PC-9 (cell line): ENCODE measurements at regions of chr6 and their contacts with region 1.

Region 1: GRCh38 chr6:28895134-28895812 is 28.5 kb downstream of the TRIM27 start:
- DNase-seq: peak; percentile 92
- H3K4me3 ChIP-seq: peak overlapping the region; percentile 92
- H3K27ac ChIP-seq: peak overlapping the region; percentile 89
- H3K4me1 ChIP-seq: peaks cover 7% of the 10 kb centered on the region
- H3K27me3 ChIP-seq: no peaks in the 10 kb centered on the region
- CTCF ChIP-seq: no peak

Region 2: GRCh38 chr6:28606424-28607400 is 288.6 kb before region 1 on chr6:
- CTCF ChIA-PET with region 1: no interaction called
- POLR2A ChIA-PET with region 1: interaction called, 12 read pairs
- intact Hi-C with region 1: no loop called
- DNase-seq: peak; percentile 55 to 62
- H3K4me3 ChIP-seq: peak overlapping the region; percentile 65
- H3K27ac ChIP-seq: 0 out of 2 replicates have a peak overlapping the region, but pooled peaks have one; percentile 5
- H3K4me1 ChIP-seq: peaks cover 10% of the 10 kb centered on the region; the same call in 1 of the 2 replicates
- H3K27me3 ChIP-seq: no peaks in the 10 kb centered on the region
- CTCF ChIP-seq: peak; percentile 68

Region 3: GRCh38 chr6:28863604-28864320 is 31.5 kb before region 1 on chr6:
- CTCF ChIA-PET with region 1: interaction called, 4 read pairs
- POLR2A ChIA-PET with region 1: interaction called, 3 read pairs
- intact Hi-C with region 1: loop called (anchors 1 kb)
- DNase-seq: peak; percentile 77 to 85
- H3K4me3 ChIP-seq: peak overlapping the region; percentile 81
- H3K27ac ChIP-seq: peak overlapping the region; percentile 37
- H3K4me1 ChIP-seq: peaks cover 12% of the 10 kb centered on the region
- H3K27me3 ChIP-seq: no peaks in the 10 kb centered on the region
- CTCF ChIP-seq: peak; percentile 35; the same call in 1 of the 2 replicates

Region 4: DNA sequence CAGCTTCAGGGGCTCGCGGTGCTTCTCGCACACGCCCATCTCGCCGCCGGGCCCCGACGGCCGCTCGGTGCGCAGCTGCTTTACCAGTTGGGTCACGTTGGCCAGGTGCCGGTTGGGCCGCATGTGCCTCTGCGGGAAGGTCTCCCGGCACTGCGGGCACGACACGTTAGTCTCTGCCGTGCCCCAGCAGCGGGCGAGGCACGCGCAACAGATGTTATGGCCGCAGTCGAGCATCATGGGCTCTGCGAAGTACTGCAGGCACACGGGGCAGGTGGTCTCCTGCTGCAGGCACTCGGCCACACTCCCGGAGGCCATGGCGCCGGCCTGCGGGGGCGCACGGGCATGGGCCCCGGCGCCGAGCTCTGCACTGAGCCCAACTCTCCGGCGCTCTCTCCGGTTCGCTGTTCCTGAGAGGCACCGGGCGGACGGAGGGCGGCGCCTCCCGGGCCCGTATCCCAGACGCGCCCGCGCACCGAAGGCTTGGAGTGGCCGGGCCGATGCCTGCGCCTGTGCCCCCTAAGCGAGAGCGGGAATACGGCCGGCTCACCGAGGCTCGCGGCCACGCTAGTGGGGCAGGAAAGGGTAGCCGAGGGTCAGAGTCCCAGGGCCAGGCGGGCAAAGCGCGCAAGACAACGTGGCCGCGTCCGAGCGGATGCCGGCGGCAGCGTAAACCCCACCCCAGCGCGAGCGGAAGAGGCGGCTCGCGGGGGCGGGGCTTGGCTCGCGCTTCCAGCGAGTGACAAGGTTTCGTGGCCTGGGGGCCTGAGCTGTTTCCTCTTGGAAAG is 28.2 kb after region 1 on chr6 and contains the start of gene TRIM27:
- CTCF ChIA-PET with region 1: no interaction called
- POLR2A ChIA-PET with region 1: interaction called, 8 read pairs
- intact Hi-C with region 1: loop called (anchors 1 kb)
- DNase-seq: peak; percentile 83 to 94
- H3K4me3 ChIP-seq: peak within 1 kb of the TSS; percentile 91
- H3K27ac ChIP-seq: peak within 1 kb of the TSS; percentile 76
- H3K4me1 ChIP-seq: peaks cover 20% of the 10 kb centered on the region
- H3K27me3 ChIP-seq: no peaks in the 10 kb centered on the region
- CTCF ChIP-seq: no peak
- total RNA-seq, gene TRIM27: 67.2 and 86.2 TPM in 2 replicates

Region 5: DNA sequence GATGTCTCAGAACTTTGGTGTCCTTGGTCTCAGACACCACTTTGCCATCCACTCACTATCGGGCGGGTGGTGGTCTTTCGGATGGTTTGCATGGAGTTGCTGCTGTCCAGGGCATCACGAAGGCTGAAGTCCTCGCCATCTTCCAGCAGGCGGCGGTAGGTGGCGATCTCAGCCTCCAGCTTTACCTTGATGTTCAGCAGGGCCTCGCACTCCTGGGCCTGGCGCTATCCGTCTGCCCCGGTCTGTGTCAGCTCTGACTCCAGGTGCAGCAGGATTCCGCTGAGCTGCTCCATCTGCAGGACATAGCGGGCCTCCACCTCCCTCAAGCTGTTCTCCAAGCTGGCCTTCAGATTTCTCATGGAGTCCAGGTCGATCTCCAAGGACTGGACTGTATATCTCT is 73.9 kb after region 1 on chr6:
- CTCF ChIA-PET with region 1: no interaction called
- POLR2A ChIA-PET with region 1: interaction called, 14 read pairs
- intact Hi-C with region 1: no loop called
- DNase-seq: no peak
- H3K4me3 ChIP-seq: no peak overlapping the region
- H3K27ac ChIP-seq: no peak overlapping the region
- H3K4me1 ChIP-seq: no peaks in the 10 kb centered on the region
- H3K27me3 ChIP-seq: no peaks in the 10 kb centered on the region
- CTCF ChIP-seq: no peak

Region 6: DNA sequence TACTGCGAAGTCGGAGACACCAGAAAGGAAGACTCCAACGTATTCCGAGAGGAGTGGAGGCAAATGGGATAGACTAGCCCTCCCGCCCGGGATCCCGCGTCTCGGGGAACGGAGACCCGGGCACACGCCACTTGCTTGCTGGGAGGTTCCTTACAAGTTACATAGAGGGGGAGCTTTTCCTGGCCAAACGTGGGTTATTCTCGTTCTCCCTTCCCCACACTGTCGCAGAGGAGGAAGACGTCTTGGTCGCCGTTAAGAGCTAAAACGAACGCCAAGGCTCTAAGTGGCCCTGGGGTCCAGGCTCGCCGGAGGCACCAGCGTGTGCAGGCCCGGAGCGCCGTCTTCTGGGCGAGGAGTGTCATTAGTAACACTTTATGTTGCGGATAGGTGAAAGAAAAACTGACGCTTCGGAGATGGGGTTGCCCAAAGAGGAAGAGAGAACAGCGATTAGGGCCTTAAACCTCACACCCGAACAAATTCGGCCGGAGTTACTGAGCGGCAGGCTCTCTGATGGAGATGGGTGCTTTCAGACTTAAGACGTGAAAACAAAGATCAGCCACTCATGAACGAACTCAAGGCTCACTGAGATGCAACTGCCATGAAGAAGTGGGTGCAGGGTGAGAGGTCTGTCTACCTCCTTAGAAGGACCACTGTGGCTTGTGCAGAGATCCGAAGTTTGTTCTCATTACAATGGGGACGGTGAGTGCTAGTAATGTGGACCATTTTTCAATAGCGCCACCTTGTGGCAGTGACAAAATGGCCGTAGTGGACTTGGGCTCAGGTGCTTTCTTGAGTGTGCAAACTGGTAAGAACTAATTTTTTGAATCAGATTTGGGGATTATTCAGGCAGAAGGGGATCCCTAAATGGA is 121.5 kb after region 1 on chr6:
- CTCF ChIA-PET with region 1: no interaction called
- POLR2A ChIA-PET with region 1: no interaction called
- intact Hi-C with region 1: loop called (anchors 1 kb)
- DNase-seq: peak; percentile 62 to 77
- H3K4me3 ChIP-seq: peak overlapping the region; percentile 73
- H3K27ac ChIP-seq: no peak overlapping the region
- H3K4me1 ChIP-seq: no peaks in the 10 kb centered on the region
- H3K27me3 ChIP-seq: no peaks in the 10 kb centered on the region
- CTCF ChIP-seq: peak; percentile 94

Region 7: GRCh38 chr6:29129326-29130012 is 234.2 kb after region 1 on chr6:
- CTCF ChIA-PET with region 1: no interaction called
- POLR2A ChIA-PET with region 1: no interaction called
- intact Hi-C with region 1: no loop called
- DNase-seq: no peak
- H3K4me3 ChIP-seq: no peak overlapping the region
- H3K27ac ChIP-seq: no peak overlapping the region
- H3K4me1 ChIP-seq: no peaks in the 10 kb centered on the region
- H3K27me3 ChIP-seq: no peaks in the 10 kb centered on the region
- CTCF ChIP-seq: no peak